Dorsolateral prefrontal cortex (tissue), 120 donors: ENCODE measurements at regions of chr5 and their contacts with region 1.

Region 1: GRCh38 chr5:24110004-24110615 is 534.7 kb downstream of the CDH10 start:
- DNase-seq: no peak
- H3K4me3 ChIP-seq: no peak overlapping the region
- H3K27ac ChIP-seq: no peak overlapping the region
- H3K27me3 ChIP-seq: no peaks in the 10 kb centered on the region
- CTCF ChIP-seq: peak in 55 of 56 donors; percentile 18 to 71 (median 51)

Region 2: GRCh38 chr5:23268136-23268535 is 842.0 kb before region 1 on chr5:
- intact Hi-C with region 1: no loop called
- DNase-seq: no peak
- H3K4me3 ChIP-seq: no peak overlapping the region
- H3K27ac ChIP-seq: no peak overlapping the region
- H3K27me3 ChIP-seq: no peaks in the 10 kb centered on the region
- CTCF ChIP-seq: no peak

Region 3: DNA sequence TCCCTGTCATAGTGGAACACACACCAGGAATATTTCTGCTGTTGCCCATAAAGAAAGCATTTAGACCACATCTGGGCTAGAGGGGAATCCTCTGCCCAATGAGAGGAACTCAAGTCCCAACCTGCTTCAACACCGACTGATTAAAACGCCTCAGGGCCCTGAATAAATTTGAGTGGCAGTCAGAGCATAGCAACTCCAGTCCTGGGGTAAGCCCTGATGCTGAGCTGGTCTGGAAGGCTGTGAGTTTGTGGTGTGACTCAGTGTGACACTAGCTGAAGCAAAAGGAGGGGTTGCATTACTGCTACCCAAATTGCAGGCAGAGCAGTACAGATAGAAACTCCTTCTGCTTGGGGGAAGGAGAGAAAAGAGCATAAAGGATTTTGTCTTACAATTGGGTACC is 454.4 kb before region 1 on chr5:
- intact Hi-C with region 1: no loop called
- DNase-seq: no peak
- H3K4me3 ChIP-seq: no peak overlapping the region
- H3K27ac ChIP-seq: no peak overlapping the region
- H3K27me3 ChIP-seq: peaks cover 0 to 4% (median 0%) of the 10 kb centered on the region in 45 donors
- CTCF ChIP-seq: no peak

Region 4: GRCh38 chr5:23820765-23821471 is 289.2 kb before region 1 on chr5:
- intact Hi-C with region 1: loop called in 1 of 2 experiments (anchors 10 kb)
- DNase-seq: no peak
- H3K4me3 ChIP-seq: no peak overlapping the region
- H3K27ac ChIP-seq: no peak overlapping the region
- H3K27me3 ChIP-seq: peaks cover 0 to 2% (median 0%) of the 10 kb centered on the region in 45 donors
- CTCF ChIP-seq: peak in 52 of 56 donors; percentile 13 to 62 (median 40)

Region 5: DNA sequence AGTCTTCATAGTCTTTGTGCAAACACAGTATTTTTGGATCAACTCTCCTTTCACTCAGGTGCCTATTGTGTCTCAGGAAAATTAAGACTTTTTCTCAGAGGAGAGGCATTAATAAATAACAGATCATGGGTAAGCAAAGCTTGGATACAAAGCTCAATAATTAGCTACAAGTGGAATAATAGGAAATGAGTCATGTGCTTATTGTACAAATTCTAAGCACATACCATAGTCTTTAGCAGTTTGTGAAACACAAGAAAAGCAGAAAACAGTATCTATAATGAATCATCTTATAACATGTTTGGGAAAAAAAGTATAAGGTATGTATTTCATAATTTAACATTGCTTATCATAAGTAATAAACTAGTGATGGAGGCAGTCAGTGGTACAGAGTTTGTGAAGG is 57.7 kb after region 1 on chr5:
- intact Hi-C with region 1: no loop called
- DNase-seq: no peak
- H3K4me3 ChIP-seq: no peak overlapping the region
- H3K27ac ChIP-seq: no peak overlapping the region
- H3K27me3 ChIP-seq: no peaks in the 10 kb centered on the region
- CTCF ChIP-seq: no peak

Region 6: DNA sequence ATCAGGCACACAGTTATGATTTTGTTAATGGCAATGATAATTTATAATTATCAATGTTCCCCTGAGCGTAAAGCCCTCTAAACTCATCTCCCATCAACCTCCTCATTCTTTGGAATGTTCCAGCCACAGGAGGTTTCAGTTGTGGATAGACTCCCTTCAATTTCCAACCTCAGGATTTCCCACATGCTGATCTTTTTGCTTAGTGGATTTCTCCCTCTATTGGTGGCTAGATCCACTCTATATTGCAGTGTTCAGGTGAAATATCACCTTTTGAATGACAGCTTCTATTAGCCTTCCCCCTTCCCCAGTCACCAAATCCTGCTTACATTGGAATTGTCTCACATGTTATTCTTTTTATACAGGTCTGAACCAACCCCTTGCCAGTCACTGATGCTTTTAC is 420.8 kb after region 1 on chr5:
- intact Hi-C with region 1: no loop called
- DNase-seq: no peak
- H3K4me3 ChIP-seq: no peak overlapping the region
- H3K27ac ChIP-seq: no peak overlapping the region
- H3K27me3 ChIP-seq: no peaks in the 10 kb centered on the region
- CTCF ChIP-seq: no peak